ENCODE measurements at regions of chr11 and their contacts with region 1.

Region 1: DNA sequence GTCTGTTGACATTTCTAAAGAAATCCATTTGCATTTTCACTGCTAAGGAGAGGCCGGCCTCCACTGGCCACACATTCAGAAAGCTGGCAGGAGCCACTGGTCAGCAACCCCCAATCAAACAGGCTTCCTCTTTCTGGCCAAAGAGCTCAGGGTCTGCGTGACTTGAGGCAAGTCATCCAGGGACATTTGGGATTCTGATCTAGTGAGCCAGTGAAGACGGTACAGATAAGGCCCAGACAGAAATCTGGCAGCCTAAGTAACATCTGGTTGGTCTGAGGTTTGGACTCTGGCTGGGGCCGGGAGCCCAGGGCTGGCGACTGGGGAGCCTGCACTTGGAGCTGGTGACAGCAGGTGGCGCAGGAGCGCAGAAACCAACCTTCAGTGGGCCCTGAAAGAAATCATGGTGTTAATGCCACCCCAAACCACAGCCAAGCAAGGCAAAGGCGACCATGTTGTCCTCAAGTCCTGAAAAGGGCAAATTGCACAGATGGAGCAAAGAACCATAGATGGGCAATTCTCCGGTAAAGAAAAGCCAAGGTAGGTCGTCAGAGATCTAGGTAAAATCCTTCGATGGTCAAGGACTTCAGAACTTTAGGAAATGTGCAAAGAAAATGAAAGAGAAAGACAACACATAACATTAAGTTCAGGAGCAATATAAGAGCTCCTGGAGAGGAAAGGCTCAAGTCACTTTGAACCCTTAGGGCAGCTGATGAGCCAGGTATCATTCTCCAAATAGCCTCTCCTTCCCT is 99.4 kb upstream of the BLID start:
- DNase-seq: peak; percentile 84
- ATAC-seq: peak; percentile 95
- H3K4me3 ChIP-seq: no peak overlapping the region
- H3K27ac ChIP-seq: peak overlapping the region; percentile 42
- H3K4me1 ChIP-seq: peaks cover 5% of the 10 kb centered on the region
- H3K27me3 ChIP-seq: no peaks in the 10 kb centered on the region
- CTCF ChIP-seq: peak; percentile 91

Region 2: DNA sequence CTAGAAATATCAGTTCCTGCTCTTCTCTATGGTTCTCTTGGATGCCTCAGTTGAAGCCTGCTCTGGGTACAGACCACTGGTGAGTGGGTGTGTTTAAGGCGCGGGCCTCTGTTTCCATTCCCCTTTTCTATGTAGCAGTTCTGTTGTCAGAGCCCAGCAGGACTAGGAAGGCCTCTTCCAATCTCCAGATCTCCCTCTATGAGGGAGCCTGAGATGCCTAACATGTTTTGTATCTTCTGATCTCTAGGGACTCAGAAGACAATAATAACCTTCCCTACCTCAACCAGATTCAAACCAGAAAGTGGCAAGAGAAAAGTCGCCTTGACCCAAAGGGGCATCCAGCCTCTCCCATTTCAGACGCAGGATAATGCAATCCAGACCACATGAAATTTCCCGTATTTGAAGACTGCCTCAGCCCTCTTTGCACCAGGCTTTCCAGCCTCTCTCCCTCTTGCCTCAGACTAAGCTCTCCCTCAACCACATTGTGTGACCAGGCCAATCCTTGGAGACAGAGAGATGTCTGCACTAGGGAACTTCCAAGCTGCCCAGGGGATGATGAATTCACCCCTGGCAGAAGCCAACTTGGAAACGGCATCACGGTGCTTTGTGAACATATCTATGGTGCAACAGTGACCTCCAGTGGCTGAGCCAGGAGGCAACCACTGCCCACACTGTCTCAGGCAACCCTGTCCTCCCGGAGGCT is 290.0 kb after region 1 on chr11:
- intact Hi-C with region 1: loop called (anchors 5 kb)
- DNase-seq: peak; percentile 75
- ATAC-seq: peak; percentile 98
- H3K4me3 ChIP-seq: no peak overlapping the region
- H3K27ac ChIP-seq: peak overlapping the region; percentile 6
- H3K4me1 ChIP-seq: no peaks in the 10 kb centered on the region
- H3K27me3 ChIP-seq: peaks cover 4% of the 10 kb centered on the region
- CTCF ChIP-seq: peak; percentile 85

Measured in upper lobe of right lung (tissue), 1 donor.